Caco-2 (cell line): ENCODE measurements at regions of chr2 and their contacts with region 1.

Region 1: DNA sequence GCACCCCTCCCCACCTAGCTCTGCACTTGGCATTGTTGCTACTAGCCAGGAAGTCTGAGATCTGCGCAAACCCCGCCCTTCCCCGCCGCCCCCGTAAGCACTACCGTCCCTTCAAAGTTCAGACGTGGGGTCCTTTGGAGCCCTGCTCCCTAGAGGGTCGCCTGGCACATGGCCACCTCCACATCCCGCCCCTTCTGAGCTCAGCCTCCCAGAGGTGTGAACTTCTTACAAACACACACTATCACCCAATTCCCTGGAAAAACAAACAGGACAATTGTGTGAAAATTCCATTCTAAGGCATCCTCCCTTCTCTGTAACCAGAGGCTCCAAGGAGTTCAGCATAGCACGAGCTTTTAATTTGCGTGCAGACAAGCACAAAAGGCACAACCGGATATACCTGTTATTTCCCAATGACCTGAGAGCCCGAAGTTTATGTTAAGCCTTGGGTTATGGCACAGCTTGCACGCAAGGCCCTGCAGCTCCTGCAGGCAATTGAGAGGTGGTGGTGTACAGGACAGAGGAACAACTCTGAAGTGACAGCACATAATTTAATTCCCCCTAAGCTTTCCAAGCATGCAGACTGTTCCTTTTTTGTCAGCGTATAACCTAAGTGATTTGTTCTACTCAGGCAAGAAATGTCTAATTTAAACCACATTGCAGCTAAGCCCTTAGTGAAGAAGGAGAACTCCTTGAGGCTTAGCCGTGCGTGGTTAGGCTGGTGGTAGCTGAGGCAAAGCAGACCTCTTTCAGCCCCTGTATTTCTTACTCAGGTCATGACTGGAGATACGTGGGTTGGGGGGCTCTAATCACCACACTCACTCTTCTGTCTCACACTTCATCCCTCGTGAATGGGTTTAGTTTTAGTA is 20.3 kb upstream of the CYP1B1 start:
- DNase-seq: peak; percentile 90 to 92
- H3K4me3 ChIP-seq: no peak overlapping the region
- H3K4me3 Mint-ChIP-seq: peak overlapping the region; percentile 60
- H3K27ac Mint-ChIP-seq: peak overlapping the region; percentile 92
- H3K4me1 ChIP-seq: peaks cover 46% of the 10 kb centered on the region
- H3K4me1 Mint-ChIP-seq: peaks cover 46% of the 10 kb centered on the region
- H3K27me3 ChIP-seq: no peaks in the 10 kb centered on the region
- H3K27me3 Mint-ChIP-seq: no peaks in the 10 kb centered on the region
- CTCF ChIP-seq: no peak

Region 2: GRCh38 chr2:36973320-36973719 is 1122.9 kb before region 1 on chr2:
- CTCF ChIA-PET with region 1: no interaction called
- POLR2A ChIA-PET with region 1: no interaction called
- intact Hi-C with region 1: no loop called
- DNase-seq: no peak
- H3K4me3 ChIP-seq: no peak overlapping the region
- H3K4me3 Mint-ChIP-seq: no peak overlapping the region
- H3K27ac Mint-ChIP-seq: no peak overlapping the region
- H3K4me1 ChIP-seq: peaks cover 4% of the 10 kb centered on the region
- H3K4me1 Mint-ChIP-seq: no peaks in the 10 kb centered on the region
- H3K27me3 ChIP-seq: no peaks in the 10 kb centered on the region
- H3K27me3 Mint-ChIP-seq: no peaks in the 10 kb centered on the region
- CTCF ChIP-seq: no peak

Region 3: GRCh38 chr2:37414470-37414949 is 681.7 kb before region 1 on chr2:
- CTCF ChIA-PET with region 1: no interaction called
- POLR2A ChIA-PET with region 1: no interaction called
- intact Hi-C with region 1: no loop called
- DNase-seq: peak in 1 of 2 experiments; percentile 51
- H3K4me3 ChIP-seq: no peak overlapping the region
- H3K4me3 Mint-ChIP-seq: no peak overlapping the region
- H3K27ac Mint-ChIP-seq: no peak overlapping the region
- H3K4me1 ChIP-seq: peaks cover 9% of the 10 kb centered on the region; the same call in 1 of the 2 replicates
- H3K4me1 Mint-ChIP-seq: peaks cover 17% of the 10 kb centered on the region
- H3K27me3 ChIP-seq: no peaks in the 10 kb centered on the region
- H3K27me3 Mint-ChIP-seq: no peaks in the 10 kb centered on the region
- CTCF ChIP-seq: peak; percentile 88 to 92

Region 4: DNA sequence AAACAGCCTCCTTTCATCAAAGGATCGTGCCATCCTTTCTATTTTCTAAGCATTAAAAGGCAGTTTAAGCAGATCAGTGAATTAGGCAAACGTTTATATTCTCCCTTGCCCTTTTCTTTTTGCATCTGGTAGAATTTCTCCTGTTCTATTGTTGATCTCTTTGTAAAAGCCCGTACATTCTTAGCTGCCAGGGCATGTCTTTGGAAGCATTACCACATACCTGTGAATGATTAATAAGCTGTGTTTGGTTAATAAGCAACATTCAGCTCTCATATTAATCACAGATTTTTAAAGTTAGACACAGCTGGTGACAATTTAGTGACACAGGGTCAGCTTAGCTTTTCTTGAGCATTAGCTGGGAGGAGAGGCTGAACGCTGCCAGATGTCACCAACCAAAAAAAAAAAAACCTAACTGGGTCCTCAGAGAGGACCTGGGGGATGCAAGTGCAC is 13.5 kb after region 1 on chr2:
- CTCF ChIA-PET with region 1: interaction called, 5 read pairs
- POLR2A ChIA-PET with region 1: interaction called, 17 read pairs
- intact Hi-C with region 1: loop called (anchors 1 kb)
- DNase-seq: no peak
- H3K4me3 ChIP-seq: no peak overlapping the region
- H3K4me3 Mint-ChIP-seq: no peak overlapping the region
- H3K27ac Mint-ChIP-seq: peak overlapping the region; percentile 20
- H3K4me1 ChIP-seq: peaks cover 22% of the 10 kb centered on the region
- H3K4me1 Mint-ChIP-seq: peaks cover 8% of the 10 kb centered on the region
- H3K27me3 ChIP-seq: no peaks in the 10 kb centered on the region
- H3K27me3 Mint-ChIP-seq: no peaks in the 10 kb centered on the region
- CTCF ChIP-seq: no peak